A549 (cell line): ENCODE measurements at regions of chr12 and their contacts with region 1.

Region 1: GRCh38 chr12:51531978-51532497 is 59.0 kb upstream of the SCN8A start:
- DNase-seq: peak; percentile 76 to 79
- ATAC-seq: peak; percentile 83 to 94
- H3K4me3 ChIP-seq: no peak overlapping the region
- H3K27ac ChIP-seq: peak overlapping the region in 1 of 2 experiments; percentile 52; a peak in 1 of 6 replicates
- H3K4me1 ChIP-seq: peaks cover 19% of the 10 kb centered on the region; the same call in 2 of the 3 replicates
- CTCF ChIP-seq: peak; percentile 89
- EP300 ChIP-seq: no peak
- POLR2A ChIP-seq: no peak
- RAD21 ChIP-seq: peak; percentile 84 to 89

Region 2: GRCh38 chr12:51430231-51430906 is 101.7 kb before region 1 on chr12:
- CTCF ChIA-PET with region 1: interaction called, 245 read pairs
- POLR2A ChIA-PET with region 1: no interaction called
- DNase-seq: peak in 1 of 2 experiments; percentile 36
- ATAC-seq: peak in 1 of 2 experiments; percentile 41; a peak in 3 of 6 replicates
- H3K4me3 ChIP-seq: no peak overlapping the region
- H3K27ac ChIP-seq: no peak overlapping the region
- H3K4me1 ChIP-seq: 0 out of 3 replicates have a peak, but pooled peaks cover 7% of the 10 kb centered on the region
- CTCF ChIP-seq: no peak
- EP300 ChIP-seq: no peak
- POLR2A ChIP-seq: no peak
- RAD21 ChIP-seq: no peak

Region 3: DNA sequence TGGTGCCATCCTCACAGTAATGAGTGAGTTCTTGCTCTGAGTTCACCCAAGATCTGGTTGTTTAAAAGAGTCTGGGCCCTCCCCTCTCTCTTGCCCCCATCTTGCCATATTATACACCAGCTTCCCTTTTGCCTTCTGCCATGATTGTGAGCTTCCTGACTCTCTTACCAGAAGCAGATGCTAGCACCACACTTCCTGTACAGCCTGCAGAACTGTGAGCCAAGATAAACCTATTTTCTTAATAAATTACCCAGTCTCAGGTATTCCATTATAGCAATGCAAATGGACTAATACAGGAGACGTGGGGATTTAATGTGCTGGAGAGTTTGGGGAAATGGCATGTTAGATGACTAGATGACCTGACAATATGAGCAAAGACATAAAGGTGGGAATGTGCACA is 94.6 kb before region 1 on chr12:
- CTCF ChIA-PET with region 1: interaction called, 12 read pairs
- POLR2A ChIA-PET with region 1: no interaction called
- DNase-seq: no peak
- ATAC-seq: no peak
- H3K4me3 ChIP-seq: no peak overlapping the region
- H3K27ac ChIP-seq: no peak overlapping the region
- H3K4me1 ChIP-seq: no peaks in the 10 kb centered on the region
- CTCF ChIP-seq: no peak
- EP300 ChIP-seq: no peak
- POLR2A ChIP-seq: no peak
- RAD21 ChIP-seq: no peak

Region 4: GRCh38 chr12:51488281-51488680 is 43.8 kb before region 1 on chr12:
- CTCF ChIA-PET with region 1: no interaction called
- POLR2A ChIA-PET with region 1: no interaction called
- DNase-seq: no peak
- ATAC-seq: no peak
- H3K4me3 ChIP-seq: no peak overlapping the region
- H3K27ac ChIP-seq: no peak overlapping the region
- H3K4me1 ChIP-seq: no peaks in the 10 kb centered on the region
- CTCF ChIP-seq: no peak
- EP300 ChIP-seq: no peak
- POLR2A ChIP-seq: no peak
- RAD21 ChIP-seq: no peak

Region 5: DNA sequence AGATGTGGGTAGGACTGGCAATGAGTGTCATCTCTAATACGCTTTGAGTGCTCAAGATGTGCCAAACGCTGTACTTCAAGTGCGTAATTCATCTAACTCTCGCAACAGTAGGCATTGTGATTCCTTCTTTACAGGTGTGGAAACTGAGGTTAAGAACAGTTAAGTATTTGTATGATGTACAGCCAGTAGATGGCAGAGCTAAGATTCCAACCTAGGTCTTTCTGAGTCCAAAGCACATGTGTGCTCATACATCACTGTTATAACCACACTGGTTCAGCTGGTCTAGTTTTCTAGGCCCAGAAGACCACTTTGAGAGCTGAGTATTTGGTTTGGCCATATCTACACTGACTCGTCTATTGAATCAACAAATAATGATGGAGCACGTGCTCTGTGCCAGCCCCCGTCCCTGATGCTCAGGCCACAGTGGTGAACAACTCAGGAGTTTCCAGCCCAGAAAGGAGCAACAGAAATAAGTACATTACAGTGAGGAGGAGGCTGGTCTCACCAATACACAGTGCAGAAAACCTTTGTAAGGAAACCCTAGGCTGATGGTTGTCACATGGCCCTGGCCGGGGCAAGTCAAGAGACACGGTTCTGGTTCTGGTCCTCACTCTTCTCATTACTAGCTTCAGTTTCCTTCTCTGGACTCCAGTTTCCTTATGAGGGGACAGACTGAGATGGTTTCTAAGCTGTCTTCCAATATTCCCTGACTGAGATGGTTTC is 10.3 kb before region 1 on chr12:
- CTCF ChIA-PET with region 1: interaction called, 47 read pairs
- POLR2A ChIA-PET with region 1: no interaction called
- DNase-seq: no peak
- ATAC-seq: peak in 1 of 2 experiments; percentile 59; a peak in 3 of 6 replicates
- H3K4me3 ChIP-seq: no peak overlapping the region
- H3K27ac ChIP-seq: no peak overlapping the region
- H3K4me1 ChIP-seq: no peaks in the 10 kb centered on the region
- CTCF ChIP-seq: 0 out of 3 replicates have a peak, but pooled peaks have one; percentile 16
- EP300 ChIP-seq: no peak
- POLR2A ChIP-seq: no peak
- RAD21 ChIP-seq: 0 out of 5 replicates have a peak, but pooled peaks of 1 of the 2 experiments have one; percentile 9